ENCODE measurements at regions of chr2 and their contacts with region 1.

Region 1: GRCh38 chr2:46082521-46083485 is 214.4 kb upstream of the EPAS1 start:
- DNase-seq: peak; percentile 81

Region 2: GRCh38 chr2:46134531-46135181 is 51.9 kb after region 1 on chr2:
- intact Hi-C with region 1: loop called in 1 of 2 experiments (anchors 2 kb)
- DNase-seq: no peak

Region 3: DNA sequence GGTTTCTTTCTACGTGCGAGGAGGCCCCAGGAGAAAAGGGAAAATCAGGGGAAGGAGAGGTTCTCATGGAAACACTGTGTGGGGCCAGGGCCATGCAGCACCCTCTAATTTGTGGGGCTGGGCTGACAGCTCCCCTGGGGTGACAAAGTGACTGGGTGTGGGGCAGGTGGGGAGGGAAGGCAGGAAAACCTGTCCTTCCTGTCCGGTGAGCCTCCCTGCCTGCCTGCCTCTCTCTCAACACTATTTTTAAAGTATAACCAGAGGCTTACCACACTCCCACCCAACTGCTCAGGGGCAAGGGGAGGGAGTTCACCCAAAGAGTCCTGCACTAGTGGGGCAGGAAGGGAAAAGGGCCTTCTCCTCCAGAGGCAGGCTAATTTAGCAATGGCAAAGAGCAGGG is 203.9 kb after region 1 on chr2:
- intact Hi-C with region 1: no loop called
- DNase-seq: no peak

Region 4: GRCh38 chr2:47283659-47284058 is 1200.9 kb after region 1 on chr2:
- intact Hi-C with region 1: loop called in 1 of 2 experiments (anchors 5 kb)
- DNase-seq: no peak